GM12878 (cell line): ENCODE measurements at regions of chr4 and their contacts with region 1.

Region 1: DNA sequence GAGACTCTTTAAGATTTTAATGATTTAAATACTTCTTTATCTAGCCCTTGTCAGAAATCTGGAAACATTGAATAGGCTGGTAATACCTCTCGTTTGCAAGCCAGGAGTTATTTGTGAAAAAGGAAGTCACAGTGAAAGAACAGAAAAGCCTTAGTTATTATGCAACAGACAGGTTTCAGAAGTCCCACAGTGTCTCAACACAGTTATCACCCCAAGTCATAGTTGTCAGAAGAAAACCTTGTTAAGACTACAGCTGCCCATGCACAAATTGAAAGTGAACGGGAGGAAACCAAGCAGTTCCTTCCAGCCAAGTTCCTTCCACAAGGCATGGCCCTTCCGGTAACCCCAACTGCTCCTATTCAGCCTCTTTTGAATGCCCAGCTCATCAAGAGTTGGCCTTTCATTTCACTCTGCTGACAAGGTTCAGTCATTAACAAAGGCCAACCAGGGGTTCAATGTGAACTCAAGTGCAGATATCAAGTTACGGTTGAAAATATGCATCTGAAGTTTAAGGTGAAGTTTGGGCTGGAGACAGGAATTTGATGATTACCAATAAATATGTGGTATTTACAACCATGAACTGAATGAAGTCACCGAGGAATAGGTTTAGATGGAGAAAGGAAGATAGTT is 15.6 kb downstream of the ALPK1 start:
- DNase-seq: peak; percentile 88
- ATAC-seq: peak; percentile 97
- H3K4me3 ChIP-seq: peak overlapping the region; percentile 70
- H3K27ac ChIP-seq: peak overlapping the region; percentile 85
- H3K4me1 ChIP-seq: peaks cover 25% of the 10 kb centered on the region
- H3K27me3 ChIP-seq: no peaks in the 10 kb centered on the region
- CTCF ChIP-seq: no peak
- EP300 ChIP-seq: peak; percentile 8 to 40; a peak in 2 of 4 replicates
- POLR2A ChIP-seq: no peak
- RAD21 ChIP-seq: no peak

Region 2: GRCh38 chr4:112279025-112279881 is 33.5 kb before region 1 on chr4:
- CTCF ChIA-PET with region 1: interaction called, 21 read pairs
- POLR2A ChIA-PET with region 1: interaction called, 16 read pairs
- RAD21 ChIA-PET with region 1: interaction called, 151 read pairs
- SMC1A ChIA-PET with region 1: interaction called, 247 read pairs
- in situ Hi-C with region 1: no loop called
- intact Hi-C with region 1: no loop called
- DNase-seq: no peak
- ATAC-seq: peak; percentile 65
- H3K4me3 ChIP-seq: peak overlapping the region; percentile 80
- H3K27ac ChIP-seq: peak overlapping the region; percentile 99
- H3K4me1 ChIP-seq: peaks cover 33% of the 10 kb centered on the region
- H3K27me3 ChIP-seq: no peaks in the 10 kb centered on the region
- CTCF ChIP-seq: no peak
- EP300 ChIP-seq: peak; percentile 46 to 49; a peak in 2 of 4 replicates
- POLR2A ChIP-seq: no peak
- RAD21 ChIP-seq: no peak

Region 3: DNA sequence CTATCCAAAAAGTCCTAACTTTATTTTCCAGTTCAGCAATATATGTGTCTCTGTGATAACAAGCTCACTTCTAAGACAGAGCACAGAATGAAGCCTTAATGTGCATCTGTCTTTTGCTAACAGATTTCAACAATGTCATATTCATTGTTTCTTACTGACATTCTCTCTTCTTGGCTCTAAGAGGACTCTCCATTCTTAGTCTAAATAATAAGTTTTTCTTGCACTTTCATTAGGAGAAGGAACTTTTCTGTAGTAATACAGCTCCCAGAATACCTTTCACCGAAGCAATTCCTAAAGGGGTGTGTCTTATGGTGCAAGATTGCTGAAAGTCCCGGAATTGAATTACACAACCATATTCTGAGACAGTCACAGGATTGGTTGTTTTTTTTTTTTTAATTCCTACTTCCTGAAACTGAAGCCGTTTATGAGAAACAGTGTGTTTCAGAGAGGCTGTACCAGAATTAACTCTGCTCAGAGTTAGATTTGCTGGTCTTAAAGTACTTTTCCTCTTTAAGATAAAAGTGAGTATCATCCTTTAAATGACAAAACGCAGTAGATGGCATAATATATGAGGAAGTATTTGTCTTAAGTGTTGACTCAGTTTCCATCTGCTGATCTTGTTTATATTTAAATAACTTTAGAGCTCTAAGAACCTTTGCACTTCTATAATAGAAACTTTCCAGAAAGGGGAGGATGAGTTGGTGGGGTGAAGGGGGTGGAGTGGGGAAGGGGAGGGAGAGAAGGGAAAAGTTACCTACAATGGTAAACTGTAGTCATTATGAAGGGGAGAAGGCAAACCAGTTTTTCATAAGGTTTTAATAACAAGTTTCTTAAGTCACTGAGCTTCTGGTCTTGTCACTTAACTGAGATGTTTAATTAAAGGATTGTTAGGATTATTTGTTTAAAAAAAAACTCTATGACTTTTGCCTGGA is 15.5 kb before region 1 on chr4 and contains the start of gene ALPK1:
- CTCF ChIA-PET with region 1: interaction called, 15 read pairs
- POLR2A ChIA-PET with region 1: interaction called, 81 read pairs
- RAD21 ChIA-PET with region 1: interaction called, 41 read pairs
- SMC1A ChIA-PET with region 1: interaction called, 91 read pairs
- in situ Hi-C with region 1: no loop called
- intact Hi-C with region 1: no loop called
- DNase-seq: no peak
- ATAC-seq: peak; percentile 89
- H3K4me3 ChIP-seq: peak within 1 kb of the TSS; percentile 67
- H3K27ac ChIP-seq: peak within 1 kb of the TSS; percentile 62
- H3K4me1 ChIP-seq: peaks cover 7% of the 10 kb centered on the region
- H3K27me3 ChIP-seq: no peaks in the 10 kb centered on the region
- CTCF ChIP-seq: no peak
- EP300 ChIP-seq: no peak
- POLR2A ChIP-seq: no peak
- RAD21 ChIP-seq: no peak
- polyA plus RNA-seq, gene ALPK1: 8.5 to 9.7 TPM

Region 4: DNA sequence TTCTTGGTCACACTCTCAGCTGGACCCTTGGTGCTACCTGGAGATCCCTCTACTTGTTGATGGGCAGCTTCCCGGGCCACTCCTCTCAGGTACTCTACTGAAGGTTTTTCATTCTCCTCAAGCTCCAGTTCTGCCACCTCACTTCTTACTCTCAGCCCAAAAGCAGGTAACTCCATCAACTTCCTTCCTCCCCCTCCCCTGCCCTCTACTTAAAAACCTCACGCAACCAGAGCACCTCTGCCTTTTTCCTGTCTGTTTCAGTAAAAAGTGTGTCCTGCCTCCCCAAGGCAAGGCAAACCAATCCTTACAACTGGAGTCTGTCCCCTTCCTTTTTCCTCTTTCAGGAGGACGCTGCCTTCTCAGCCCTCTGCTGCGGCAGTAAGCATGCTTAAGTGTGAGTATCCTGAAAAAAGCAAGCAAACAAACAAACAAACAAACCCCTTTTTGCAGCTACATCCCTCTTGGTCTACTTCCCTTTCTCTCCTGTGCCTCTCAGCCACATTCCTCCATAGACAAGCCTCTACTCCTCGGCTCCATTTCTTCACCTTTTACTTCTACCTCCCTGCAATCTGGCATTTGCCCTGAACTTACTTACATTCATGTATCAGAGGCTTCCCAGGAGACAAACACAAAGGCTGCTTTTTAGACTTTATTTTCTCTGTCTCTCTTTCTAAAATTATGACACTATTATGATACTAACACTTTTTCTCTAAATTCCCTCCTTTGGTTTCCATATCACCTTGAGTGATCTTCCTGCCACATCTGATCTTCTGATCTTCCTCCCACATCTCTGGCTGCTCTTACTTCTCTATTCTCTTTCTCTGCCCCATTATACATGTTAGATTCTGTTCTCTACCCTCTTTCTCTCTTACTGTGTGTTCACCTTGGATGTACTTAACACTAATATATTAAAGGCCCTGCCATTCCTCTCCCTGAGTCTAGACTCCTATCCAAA is 10.1 kb before region 1 on chr4:
- CTCF ChIA-PET with region 1: interaction called, 15 read pairs
- POLR2A ChIA-PET with region 1: interaction called, 81 read pairs
- RAD21 ChIA-PET with region 1: interaction called, 41 read pairs
- SMC1A ChIA-PET with region 1: interaction called, 91 read pairs
- in situ Hi-C with region 1: no loop called
- intact Hi-C with region 1: no loop called
- DNase-seq: no peak
- ATAC-seq: peak; percentile 83
- H3K4me3 ChIP-seq: no peak overlapping the region; the same call in 1 of the 2 replicates
- H3K27ac ChIP-seq: peak overlapping the region; percentile 67
- H3K4me1 ChIP-seq: peaks cover 17% of the 10 kb centered on the region
- H3K27me3 ChIP-seq: no peaks in the 10 kb centered on the region
- CTCF ChIP-seq: no peak
- EP300 ChIP-seq: no peak
- POLR2A ChIP-seq: no peak
- RAD21 ChIP-seq: no peak

Region 5: DNA sequence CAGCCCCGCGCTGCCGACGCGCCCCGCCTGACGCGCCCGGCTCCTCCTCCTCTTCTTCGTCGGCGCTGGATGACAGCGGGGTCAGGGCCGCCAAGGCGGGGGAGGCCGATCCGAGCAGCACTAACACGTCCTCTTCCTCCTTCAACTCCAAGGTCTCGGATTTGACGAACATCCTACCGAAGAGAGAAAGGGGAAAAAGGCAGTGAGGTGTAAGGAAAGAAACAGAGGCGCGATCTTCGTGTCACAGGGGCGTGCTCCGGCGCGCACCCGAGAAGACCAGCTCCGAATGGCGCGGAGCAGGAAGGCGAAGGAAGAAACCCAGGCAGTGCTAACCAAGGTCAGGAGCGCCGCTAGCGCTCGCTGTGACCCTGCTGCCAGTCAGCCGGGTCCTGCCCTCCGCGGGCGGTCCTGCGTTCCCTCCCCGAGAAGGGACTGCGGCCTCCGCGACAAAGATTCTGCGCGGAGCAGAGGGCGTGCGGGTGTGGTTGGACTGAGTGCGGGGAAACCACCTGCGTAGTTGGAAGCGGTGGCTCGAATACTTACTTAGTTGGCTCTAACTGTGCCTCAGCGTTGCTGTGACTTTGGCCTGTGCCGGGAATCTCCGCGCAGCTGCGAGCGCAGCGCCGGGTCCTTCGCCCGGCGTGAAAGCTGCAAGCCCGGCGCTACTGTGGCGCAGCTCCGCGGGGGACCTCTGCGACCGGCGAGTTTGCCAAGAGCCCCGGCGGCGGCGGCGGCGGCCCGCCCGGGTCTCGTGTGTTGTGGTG is 202.8 kb after region 1 on chr4:
- CTCF ChIA-PET with region 1: interaction called, 3 read pairs
- POLR2A ChIA-PET with region 1: interaction called, 14 read pairs
- RAD21 ChIA-PET with region 1: interaction called, 19 read pairs
- SMC1A ChIA-PET with region 1: interaction called, 11 read pairs
- in situ Hi-C with region 1: no loop called
- intact Hi-C with region 1: no loop called
- DNase-seq: no peak
- ATAC-seq: peak; percentile 65
- H3K4me3 ChIP-seq: peak overlapping the region; percentile 80
- H3K27ac ChIP-seq: peak overlapping the region; percentile 57
- H3K4me1 ChIP-seq: peaks cover 4% of the 10 kb centered on the region
- H3K27me3 ChIP-seq: peaks cover 5 to 14% of the 10 kb centered on the region in 2 experiments
- CTCF ChIP-seq: no peak
- EP300 ChIP-seq: no peak
- POLR2A ChIP-seq: peak; percentile 68
- RAD21 ChIP-seq: no peak